ENCODE measurements at regions of chr2 and their contacts with region 1.

Region 1: DNA sequence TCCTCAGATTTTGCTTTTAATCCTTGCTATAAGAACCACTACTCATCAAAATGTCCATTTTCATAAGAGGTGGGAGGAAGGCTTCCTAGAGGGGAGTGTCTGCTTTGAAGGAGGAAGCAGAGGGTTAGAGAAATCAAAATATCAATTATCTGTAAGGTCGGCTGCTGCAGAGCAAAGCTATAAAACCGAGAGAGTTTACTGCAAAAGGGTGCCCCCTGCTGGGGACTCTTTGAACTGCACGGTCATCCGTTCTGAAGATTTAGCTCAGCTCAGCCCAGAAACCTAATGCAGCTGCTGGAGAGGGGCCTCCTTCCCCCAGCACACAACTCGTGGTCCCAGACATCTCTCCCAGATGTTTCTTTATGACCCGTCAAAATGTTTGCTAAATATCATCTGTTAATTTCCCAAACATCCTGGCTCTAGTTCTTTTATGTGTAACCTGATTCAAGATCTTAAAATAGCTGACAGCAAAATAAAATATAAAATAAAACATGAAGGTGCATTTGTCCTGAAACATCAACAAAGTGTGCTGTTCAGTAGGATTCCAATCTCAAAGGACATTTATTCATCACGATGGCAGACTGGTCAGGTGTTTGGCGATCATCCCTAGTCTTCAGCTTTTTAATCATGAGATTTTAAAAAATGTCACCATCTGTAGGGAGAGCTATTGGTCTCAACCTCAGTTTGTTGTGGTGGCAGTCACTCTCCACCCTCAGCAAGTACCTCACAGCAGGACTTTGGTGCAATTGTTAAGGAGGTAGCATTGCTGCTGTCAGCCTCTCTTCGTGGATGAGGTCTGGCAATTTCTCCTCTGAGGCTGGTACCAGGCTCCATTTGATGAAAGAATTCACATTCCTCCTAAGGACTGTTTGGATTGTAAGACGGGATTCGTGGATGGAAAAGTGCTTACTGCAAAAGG is 185.9 kb downstream of the MTX2 start:
- DNase-seq: peak; percentile 54 to 68 (median 63)
- H3K4me3 ChIP-seq: no peak overlapping the region
- H3K4me3 Mint-ChIP-seq: no peak overlapping the region
- H3K27ac ChIP-seq: no peak overlapping the region
- H3K27ac Mint-ChIP-seq: no peak overlapping the region
- H3K4me1 ChIP-seq: peaks cover 5% of the 10 kb centered on the region
- H3K4me1 Mint-ChIP-seq: peaks cover 0 to 2% (median 0%) of the 10 kb centered on the region in 4 donors
- H3K27me3 ChIP-seq: peaks cover 8% of the 10 kb centered on the region
- H3K27me3 Mint-ChIP-seq: peaks cover 10 to 29% of the 10 kb centered on the region in 2 donors

Region 2: DNA sequence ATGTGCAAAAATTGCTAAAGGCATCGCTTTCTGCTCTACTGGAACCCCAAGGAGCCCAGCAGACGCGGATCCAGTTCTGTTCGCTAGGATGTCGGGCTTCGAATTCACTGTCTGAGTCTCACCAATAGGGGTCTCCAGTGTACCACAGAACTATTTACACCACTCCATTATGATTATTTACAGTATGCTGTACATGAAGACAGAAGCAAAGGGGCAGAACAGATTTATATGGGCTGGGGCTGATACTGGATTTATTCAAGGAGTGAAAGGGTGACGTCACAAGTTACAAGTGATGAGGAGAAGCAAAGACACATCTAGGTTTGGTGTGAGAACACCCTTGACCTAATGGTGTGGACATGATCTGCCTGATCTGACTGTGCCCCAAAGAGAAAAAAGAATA is 1088.3 kb before region 1 on chr2:
- CTCF ChIA-PET with region 1: no interaction called
- POLR2A ChIA-PET with region 1: no interaction called
- intact Hi-C with region 1: loop called (anchors 2 kb)
- DNase-seq: peak in 3 of 5 donors; percentile 4 to 15 (median 15)
- H3K4me3 ChIP-seq: no peak overlapping the region
- H3K4me3 Mint-ChIP-seq: no peak overlapping the region
- H3K27ac ChIP-seq: no peak overlapping the region
- H3K27ac Mint-ChIP-seq: no peak overlapping the region
- H3K4me1 ChIP-seq: no peaks in the 10 kb centered on the region
- H3K4me1 Mint-ChIP-seq: no peaks in the 10 kb centered on the region
- H3K27me3 ChIP-seq: no peaks in the 10 kb centered on the region
- H3K27me3 Mint-ChIP-seq: peaks cover 5 to 21% of the 10 kb centered on the region in 2 donors

Region 3: GRCh38 chr2:176140513-176141317 is 314.4 kb before region 1 on chr2:
- CTCF ChIA-PET with region 1: interaction called, 28 read pairs
- POLR2A ChIA-PET with region 1: no interaction called
- intact Hi-C with region 1: no loop called
- DNase-seq: peak; percentile 47 to 61 (median 53)
- H3K4me3 ChIP-seq: no peak overlapping the region
- H3K4me3 Mint-ChIP-seq: peak overlapping the region in 5 of 8 donors; percentile 21 to 38 (median 35)
- H3K27ac ChIP-seq: no peak overlapping the region
- H3K27ac Mint-ChIP-seq: peak overlapping the region in 3 of 7 donors; percentile 64 to 84 (median 66)
- H3K4me1 ChIP-seq: peaks cover 25% of the 10 kb centered on the region
- H3K4me1 Mint-ChIP-seq: peaks cover 13 to 37% (median 24%) of the 10 kb centered on the region in 4 donors
- H3K27me3 ChIP-seq: peaks cover 80% of the 10 kb centered on the region
- H3K27me3 Mint-ChIP-seq: peaks cover 69 to 74% of the 10 kb centered on the region in 2 donors

Region 4: DNA sequence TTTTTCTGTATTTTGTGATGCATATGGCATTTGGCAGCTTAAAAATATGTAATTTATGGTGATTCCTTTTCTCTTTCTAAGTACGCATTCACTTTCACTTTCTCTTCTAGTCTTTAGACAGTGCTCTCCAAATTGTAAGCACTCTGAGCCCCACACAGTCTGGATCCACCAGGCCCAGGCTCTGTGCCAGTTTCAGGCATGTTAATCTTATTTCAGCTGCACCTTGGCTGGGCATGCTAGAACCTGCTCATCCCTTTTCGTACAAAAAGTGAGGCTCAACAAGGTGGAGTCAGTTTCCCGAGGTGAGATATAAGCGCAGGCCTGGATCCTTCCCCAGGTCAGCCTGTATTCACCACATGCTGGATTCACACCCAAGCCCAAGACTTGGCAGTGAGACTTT is 18.0 kb after region 1 on chr2:
- CTCF ChIA-PET with region 1: interaction called, 26 read pairs
- POLR2A ChIA-PET with region 1: no interaction called
- intact Hi-C with region 1: no loop called
- DNase-seq: no peak
- H3K4me3 ChIP-seq: peak overlapping the region in 1 of 2 donors; percentile 17
- H3K4me3 Mint-ChIP-seq: peak overlapping the region in 7 of 8 donors; percentile 22 to 82 (median 76)
- H3K27ac ChIP-seq: no peak overlapping the region
- H3K27ac Mint-ChIP-seq: peak overlapping the region in 3 of 7 donors; percentile 46 to 72 (median 62)
- H3K4me1 ChIP-seq: peaks cover 11% of the 10 kb centered on the region
- H3K4me1 Mint-ChIP-seq: peaks cover 9 to 17% (median 11%) of the 10 kb centered on the region in 4 donors
- H3K27me3 ChIP-seq: no peaks in the 10 kb centered on the region
- H3K27me3 Mint-ChIP-seq: peaks cover 2 to 4% of the 10 kb centered on the region in 2 donors

Region 5: DNA sequence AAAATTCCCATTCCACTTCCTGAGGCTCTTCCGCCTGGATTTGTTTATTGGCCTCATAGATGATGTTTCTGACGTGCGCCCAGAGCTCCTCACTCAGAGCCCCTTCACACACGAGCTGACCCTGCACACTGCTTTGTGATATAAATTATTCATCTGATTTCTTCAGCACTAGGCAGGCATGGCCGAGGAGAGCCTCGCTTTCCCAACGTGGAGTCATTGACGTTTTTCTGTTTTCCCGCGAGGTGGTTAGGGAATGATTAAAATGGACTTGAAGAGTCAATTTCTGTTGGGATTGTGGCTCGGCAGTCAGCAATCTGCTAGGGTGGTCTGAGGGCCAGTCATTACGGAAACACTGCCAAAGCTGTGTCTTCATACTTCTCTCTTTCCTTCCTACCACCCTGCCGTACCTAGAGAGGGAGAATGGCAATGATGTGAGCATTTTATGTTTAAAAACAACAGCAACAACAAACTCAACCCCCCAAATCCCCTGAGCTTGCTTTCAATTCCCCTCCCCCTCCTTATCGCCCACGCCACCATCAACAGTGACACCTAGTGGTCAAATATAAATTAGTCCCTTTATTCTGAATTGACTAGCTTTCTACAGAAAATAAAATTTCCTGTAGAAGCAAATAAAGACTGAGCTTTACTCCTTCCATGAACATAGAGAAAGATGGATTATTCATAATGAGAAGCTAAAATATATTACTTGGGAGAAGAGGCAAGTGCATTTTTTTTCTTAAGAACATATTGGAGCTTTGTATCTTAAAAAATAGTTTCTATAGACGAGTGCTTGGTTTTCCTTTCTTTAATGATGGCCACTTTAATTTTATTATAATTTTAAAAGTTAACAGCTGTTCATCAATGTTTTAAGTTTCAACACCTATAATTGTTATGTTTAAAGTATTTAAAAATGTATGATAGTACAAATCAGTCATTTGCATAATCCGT is 99.2 kb after region 1 on chr2:
- CTCF ChIA-PET with region 1: interaction called, 13 read pairs
- POLR2A ChIA-PET with region 1: no interaction called
- intact Hi-C with region 1: no loop called
- DNase-seq: peak in 4 of 5 donors; percentile 42 to 48 (median 45)
- H3K4me3 ChIP-seq: peak overlapping the region; percentile 21 to 33
- H3K4me3 Mint-ChIP-seq: peak overlapping the region; percentile 82 to 94 (median 88)
- H3K27ac ChIP-seq: no peak overlapping the region
- H3K27ac Mint-ChIP-seq: no peak overlapping the region
- H3K4me1 ChIP-seq: peaks cover 10% of the 10 kb centered on the region
- H3K4me1 Mint-ChIP-seq: peaks cover 6 to 13% (median 10%) of the 10 kb centered on the region in 4 donors
- H3K27me3 ChIP-seq: peaks cover 3% of the 10 kb centered on the region
- H3K27me3 Mint-ChIP-seq: peaks cover 20 to 28% of the 10 kb centered on the region in 2 donors

Region 6: DNA sequence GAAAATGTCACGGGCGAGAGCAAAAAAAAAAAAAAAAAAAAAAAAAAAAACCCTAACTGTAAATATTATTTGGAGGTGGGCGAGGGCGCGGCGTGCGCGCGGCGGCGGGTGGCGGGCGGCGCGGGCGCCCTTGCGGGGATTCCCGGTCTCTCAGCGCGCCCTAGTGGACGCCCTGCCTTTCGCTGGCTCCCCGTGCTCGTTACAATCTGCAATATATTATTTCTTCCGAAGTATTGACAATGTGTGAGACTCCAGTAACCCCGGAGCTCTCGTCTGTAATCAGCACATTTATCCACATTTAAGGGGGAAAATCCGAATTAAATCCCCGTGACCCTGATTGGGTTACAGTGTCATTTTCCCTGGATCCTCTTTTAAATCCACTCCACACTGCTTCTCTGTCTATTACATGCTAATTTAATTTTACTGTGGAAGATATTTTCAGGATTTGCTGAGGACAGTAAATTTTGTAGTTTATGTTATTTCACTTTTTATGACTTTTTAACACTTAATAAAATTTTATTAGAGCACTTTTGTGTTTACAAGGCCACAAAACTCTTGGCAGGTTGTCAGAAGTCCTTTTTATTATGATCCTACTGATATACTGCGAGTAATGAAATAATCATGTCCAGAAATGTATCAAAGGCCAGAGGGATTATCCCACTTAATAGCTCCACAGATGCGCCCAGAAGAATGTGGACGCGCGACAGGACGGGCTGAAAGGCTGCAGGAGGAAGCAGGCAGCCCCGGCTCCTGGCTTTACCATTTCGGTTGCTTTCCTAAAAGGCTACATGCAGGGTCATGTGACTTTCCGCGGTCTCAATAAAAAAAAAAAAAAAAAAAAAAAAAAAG is 183.2 kb after region 1 on chr2:
- CTCF ChIA-PET with region 1: interaction called, 4 read pairs
- POLR2A ChIA-PET with region 1: no interaction called
- intact Hi-C with region 1: loop called (anchors 5 kb)
- DNase-seq: peak in 4 of 5 donors; percentile 30 to 38 (median 37)
- H3K4me3 ChIP-seq: peak overlapping the region in 1 of 2 donors; percentile 41
- H3K4me3 Mint-ChIP-seq: peak overlapping the region; percentile 55 to 82 (median 68)
- H3K27ac ChIP-seq: no peak overlapping the region
- H3K27ac Mint-ChIP-seq: no peak overlapping the region
- H3K4me1 ChIP-seq: peaks cover 3% of the 10 kb centered on the region
- H3K4me1 Mint-ChIP-seq: peaks cover 0 to 11% (median 3%) of the 10 kb centered on the region in 4 donors
- H3K27me3 ChIP-seq: peaks cover 20% of the 10 kb centered on the region
- H3K27me3 Mint-ChIP-seq: peaks cover 37 to 52% of the 10 kb centered on the region in 2 donors

Measured in CD4-positive, alpha-beta memory T cell (primary cell).